Sigmoid colon (tissue), 7 donors: ENCODE measurements at regions of chr2 and their contacts with region 1.

Region 1: GRCh38 chr2:172555522-172556283 is at the start of gene PDK1:
- DNase-seq: peak; percentile 94
- H3K4me3 ChIP-seq: peak within 1 kb of the TSS; percentile 48 to 98 (median 82)
- H3K27ac ChIP-seq: peak within 1 kb of the TSS; percentile 85 to 96 (median 91)
- H3K4me1 ChIP-seq: peaks cover 0 to 17% (median 10%) of the 10 kb centered on the region in 4 donors
- H3K27me3 ChIP-seq: no peaks in the 10 kb centered on the region
- CTCF ChIP-seq: no peak
- EP300 ChIP-seq: peak in 1 of 4 donors; percentile 4
- POLR2A ChIP-seq: peak in 1 of 2 donors; percentile 29
- total RNA-seq, gene PDK1: 6.4 to 15.0 (median 12.4) TPM

Region 2: GRCh38 chr2:172329774-172330671 is 225.7 kb before region 1 on chr2:
- intact Hi-C with region 1: no loop called
- DNase-seq: peak; percentile 68
- H3K4me3 ChIP-seq: no peak overlapping the region
- H3K27ac ChIP-seq: peak overlapping the region in 1 of 4 donors; percentile 46
- H3K4me1 ChIP-seq: no peaks in the 10 kb centered on the region
- H3K27me3 ChIP-seq: no peaks in the 10 kb centered on the region
- CTCF ChIP-seq: no peak
- EP300 ChIP-seq: no peak
- POLR2A ChIP-seq: no peak

Region 3: GRCh38 chr2:172496160-172496608 is 59.5 kb before region 1 on chr2:
- intact Hi-C with region 1: no loop called
- DNase-seq: no peak
- H3K4me3 ChIP-seq: no peak overlapping the region
- H3K27ac ChIP-seq: no peak overlapping the region
- H3K4me1 ChIP-seq: no peaks in the 10 kb centered on the region
- H3K27me3 ChIP-seq: no peaks in the 10 kb centered on the region
- CTCF ChIP-seq: no peak
- EP300 ChIP-seq: no peak
- POLR2A ChIP-seq: no peak

Region 4: DNA sequence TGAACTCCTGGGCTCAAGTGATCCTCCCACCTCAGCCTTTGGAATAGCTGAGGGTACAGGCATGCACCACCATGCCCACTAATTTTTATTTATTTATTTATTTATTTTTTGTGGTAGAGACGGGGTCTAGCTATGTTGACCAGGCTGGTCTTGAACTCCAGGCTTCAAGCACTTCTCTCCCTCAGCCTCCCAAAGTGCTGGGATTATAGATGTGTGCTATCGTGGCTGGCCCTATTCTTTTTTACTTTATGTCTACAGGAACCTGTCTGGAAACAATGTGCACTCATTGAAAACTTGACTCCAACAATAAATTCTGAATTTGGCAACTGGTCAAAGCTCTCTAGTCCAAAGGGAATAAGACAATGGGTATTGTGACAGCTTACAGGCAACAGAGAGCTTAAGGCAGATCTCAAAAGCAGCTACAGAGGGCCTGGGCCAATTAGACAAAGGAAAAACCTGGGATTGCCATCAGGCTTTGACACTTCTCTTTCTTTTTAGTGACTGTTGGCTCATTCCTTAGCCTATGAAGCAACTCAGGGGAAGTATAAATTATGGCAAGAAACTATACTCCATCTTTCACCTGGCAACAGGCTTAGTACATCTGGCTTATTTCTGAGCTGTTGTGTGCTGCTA is 124.8 kb after region 1 on chr2:
- intact Hi-C with region 1: no loop called
- DNase-seq: no peak
- H3K4me3 ChIP-seq: no peak overlapping the region
- H3K27ac ChIP-seq: peak overlapping the region in 2 of 4 donors; percentile 36 to 65
- H3K4me1 ChIP-seq: peaks cover 0 to 29% (median 15%) of the 10 kb centered on the region in 4 donors
- H3K27me3 ChIP-seq: no peaks in the 10 kb centered on the region
- CTCF ChIP-seq: no peak
- EP300 ChIP-seq: no peak
- POLR2A ChIP-seq: no peak

Region 5: GRCh38 chr2:173059927-173060565 is 504.3 kb after region 1 on chr2:
- intact Hi-C with region 1: loop called (anchors 10 kb)
- DNase-seq: no peak
- H3K4me3 ChIP-seq: no peak overlapping the region
- H3K27ac ChIP-seq: peak overlapping the region in 1 of 4 donors; percentile 6
- H3K4me1 ChIP-seq: no peaks in the 10 kb centered on the region
- H3K27me3 ChIP-seq: no peaks in the 10 kb centered on the region
- CTCF ChIP-seq: no peak
- EP300 ChIP-seq: no peak
- POLR2A ChIP-seq: no peak